Posterior vena cava (tissue), 2 donors: ENCODE measurements at regions of chr7 and their contacts with region 1.

Region 1: DNA sequence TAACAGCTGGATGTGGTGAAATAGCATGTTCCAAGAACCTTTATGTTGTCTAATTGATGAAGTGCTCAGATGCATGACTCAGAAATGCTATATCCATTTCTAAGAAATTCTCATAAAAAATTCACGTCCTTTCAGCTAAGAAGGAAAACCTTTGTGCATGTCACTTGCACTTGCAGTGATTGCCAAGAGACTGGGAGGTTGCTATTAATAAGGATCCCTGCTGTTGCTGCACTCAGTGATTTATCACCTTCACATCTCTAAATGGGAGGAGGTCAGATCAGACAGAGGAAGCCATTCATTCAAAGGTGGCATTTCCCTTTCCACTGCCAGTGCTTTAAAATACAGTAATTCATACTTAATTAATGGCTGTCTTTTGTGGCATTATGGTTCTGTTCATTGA is 89.5 kb downstream of the THSD7A start:
- DNase-seq: no peak

Region 2: GRCh38 chr7:11681461-11681860 is 61.0 kb before region 1 on chr7:
- intact Hi-C with region 1: loop called in 1 of 2 experiments (anchors 2 kb)
- DNase-seq: no peak

Region 3: DNA sequence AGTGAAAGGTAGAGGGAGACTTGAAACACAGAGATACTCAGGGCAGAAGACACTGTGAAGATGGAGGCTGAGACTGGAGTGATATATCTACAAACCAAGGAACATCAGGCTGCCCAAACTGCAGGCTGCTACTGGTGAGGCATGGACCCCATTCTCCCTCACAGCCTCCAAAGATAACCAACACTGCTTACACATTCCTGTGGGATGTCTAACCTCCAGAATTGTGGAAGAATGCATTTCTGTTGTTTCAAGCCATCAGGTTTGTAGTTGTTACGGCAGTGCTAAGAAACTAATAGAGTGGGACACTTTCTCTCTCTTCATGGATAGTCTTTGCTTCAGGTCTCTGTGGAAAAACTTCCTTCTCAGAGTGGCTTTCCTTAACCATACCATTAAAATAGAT is 286.0 kb after region 1 on chr7:
- intact Hi-C with region 1: no loop called
- DNase-seq: no peak

Region 4: DNA sequence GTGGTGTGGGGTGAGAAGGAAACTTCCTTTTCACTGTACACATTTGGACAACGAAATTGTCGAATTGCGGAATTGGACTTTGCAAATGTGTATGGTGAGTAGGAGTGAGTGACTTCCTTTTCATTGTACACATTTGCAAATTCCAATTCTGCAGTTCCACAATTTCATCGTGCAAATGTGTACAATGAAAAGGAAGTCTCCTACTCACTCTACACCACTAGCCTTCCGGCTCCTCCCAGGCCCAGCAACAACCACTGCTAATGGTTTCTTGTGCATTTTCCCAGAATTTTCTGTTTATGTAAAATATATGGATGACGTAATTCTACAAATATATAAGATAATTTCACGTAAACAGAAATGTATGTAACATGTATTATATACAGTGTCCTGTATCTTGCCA is 1063.5 kb after region 1 on chr7:
- intact Hi-C with region 1: no loop called
- DNase-seq: no peak